ENCODE measurements at regions of chr9 and their contacts with region 1.

Region 1: GRCh38 chr9:68678430-68678829 is 26.6 kb upstream of the PIP5K1B start:
- DNase-seq: peak in 1 of 3 donors; percentile 22
- ATAC-seq: peak; percentile 69 to 74
- H3K4me3 ChIP-seq: no peak overlapping the region
- H3K27ac ChIP-seq: no peak overlapping the region
- H3K4me1 ChIP-seq: peaks cover 3% of the 10 kb centered on the region
- H3K27me3 ChIP-seq: no peaks in the 10 kb centered on the region

Region 2: GRCh38 chr9:68619636-68620035 is 58.8 kb before region 1 on chr9:
- intact Hi-C with region 1: loop called in 1 of 4 experiments (anchors 10 kb)
- DNase-seq: no peak
- ATAC-seq: no peak
- H3K4me3 ChIP-seq: no peak overlapping the region
- H3K27ac ChIP-seq: no peak overlapping the region
- H3K4me1 ChIP-seq: no peaks in the 10 kb centered on the region
- H3K27me3 ChIP-seq: no peaks in the 10 kb centered on the region

Region 3: DNA sequence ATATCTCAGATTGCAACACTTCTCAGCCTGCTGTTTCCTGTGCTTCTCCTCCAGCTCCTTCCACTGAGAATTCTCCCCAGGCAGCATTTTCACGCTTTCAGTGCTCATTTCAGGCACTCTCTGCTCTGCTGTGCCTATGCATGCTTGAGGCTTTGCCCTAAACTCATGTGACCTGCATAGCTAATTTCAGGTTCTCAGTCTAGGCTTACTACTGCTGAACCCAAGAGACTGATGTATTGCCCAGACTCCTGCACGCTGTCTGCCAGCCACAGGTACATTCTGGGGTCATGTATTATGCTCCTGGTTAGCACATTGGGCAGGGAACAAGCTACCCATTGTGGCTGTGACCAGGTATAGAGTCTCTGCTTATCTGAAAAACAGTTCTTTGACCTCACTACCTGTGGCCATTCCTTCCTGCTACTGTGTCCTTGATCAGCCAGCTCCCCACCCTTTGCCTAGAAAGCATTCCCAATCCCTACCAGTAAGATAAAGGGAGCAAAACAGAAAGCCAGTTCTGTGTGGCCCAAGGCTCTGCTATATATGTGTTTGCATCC is 61.3 kb after region 1 on chr9:
- intact Hi-C with region 1: no loop called
- DNase-seq: no peak
- ATAC-seq: peak; percentile 46 to 70
- H3K4me3 ChIP-seq: no peak overlapping the region
- H3K27ac ChIP-seq: peak overlapping the region; percentile 70
- H3K4me1 ChIP-seq: peaks cover 13% of the 10 kb centered on the region
- H3K27me3 ChIP-seq: no peaks in the 10 kb centered on the region